ENCODE measurements at regions of chr17 and their contacts with region 1.

Region 1: GRCh38 chr17:44123356-44124117 is at the start of gene HDAC5:
- DNase-seq: peak; percentile 93
- H3K4me3 Mint-ChIP-seq: peak within 1 kb of the TSS; percentile 90
- H3K27ac Mint-ChIP-seq: peak within 1 kb of the TSS; percentile 95
- H3K4me1 Mint-ChIP-seq: peaks cover 17% of the 10 kb centered on the region
- H3K27me3 Mint-ChIP-seq: peaks cover 9% of the 10 kb centered on the region
- total RNA-seq, gene HDAC5: 18.7 and 19.9 TPM in 2 replicates

Region 2: GRCh38 chr17:44086364-44087311 is 36.9 kb before region 1 on chr17:
- intact Hi-C with region 1: loop called (anchors 2 kb)
- DNase-seq: peak; percentile 23
- H3K4me3 Mint-ChIP-seq: peak overlapping the region; percentile 35
- H3K27ac Mint-ChIP-seq: peak overlapping the region; percentile 69
- H3K4me1 Mint-ChIP-seq: peaks cover 13% of the 10 kb centered on the region
- H3K27me3 Mint-ChIP-seq: no peaks in the 10 kb centered on the region

Region 3: DNA sequence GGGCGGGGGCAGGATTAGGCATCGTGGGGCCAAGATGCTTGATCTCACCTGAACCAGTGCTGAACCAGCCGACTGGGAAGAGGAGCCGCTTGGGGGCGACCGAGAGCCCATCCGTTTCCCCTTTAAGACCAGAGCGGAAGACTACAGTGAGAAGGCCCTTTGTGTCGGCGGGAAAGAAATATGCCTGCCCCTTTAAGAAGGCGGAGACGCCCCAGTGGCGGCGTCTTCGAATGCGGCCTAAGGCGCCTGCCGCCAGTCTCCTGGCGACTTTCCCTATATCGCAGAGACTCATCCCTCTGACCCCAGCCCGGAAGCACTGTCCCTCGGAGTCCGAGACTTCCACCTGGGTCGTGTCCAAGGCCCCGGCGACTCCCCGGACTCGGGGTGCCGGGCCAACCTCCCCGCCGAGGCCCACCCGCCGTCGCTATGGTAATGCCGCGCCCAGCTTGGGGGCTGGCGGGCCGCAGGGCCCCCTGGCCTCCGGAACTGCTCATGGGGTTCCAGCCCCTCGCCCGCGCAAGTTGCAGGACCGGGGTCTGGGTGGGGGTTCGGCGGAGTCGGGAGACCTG is 18.3 kb after region 1 on chr17 and contains the start of gene HROB:
- intact Hi-C with region 1: loop called (anchors 1 kb)
- DNase-seq: peak; percentile 97
- H3K4me3 Mint-ChIP-seq: peak within 1 kb of the TSS; percentile 91
- H3K27ac Mint-ChIP-seq: peak within 1 kb of the TSS; percentile 94
- H3K4me1 Mint-ChIP-seq: peaks cover 15% of the 10 kb centered on the region
- H3K27me3 Mint-ChIP-seq: no peaks in the 10 kb centered on the region
- total RNA-seq, gene HROB: 20.7 and 24.1 TPM in 2 replicates